Natural killer cell (primary cell): ENCODE measurements at regions of chr10 and their contacts with region 1.

Region 1: GRCh38 chr10:5014936-5015335 is 11.3 kb upstream of the AKR1C2 start:
- DNase-seq: peak in 1 of 2 donors; percentile 5
- ATAC-seq: peak in 2 of 3 donors; percentile 34 to 53
- H3K4me3 ChIP-seq: no peak overlapping the region
- H3K4me3 Mint-ChIP-seq: no peak overlapping the region
- H3K27ac ChIP-seq: no peak overlapping the region
- H3K27ac Mint-ChIP-seq: no peak overlapping the region
- H3K4me1 ChIP-seq: no peaks in the 10 kb centered on the region
- H3K4me1 Mint-ChIP-seq: no peaks in the 10 kb centered on the region
- H3K27me3 ChIP-seq: no peaks in the 10 kb centered on the region
- H3K27me3 Mint-ChIP-seq: no peaks in the 10 kb centered on the region
- CTCF ChIP-seq: no peak

Region 2: DNA sequence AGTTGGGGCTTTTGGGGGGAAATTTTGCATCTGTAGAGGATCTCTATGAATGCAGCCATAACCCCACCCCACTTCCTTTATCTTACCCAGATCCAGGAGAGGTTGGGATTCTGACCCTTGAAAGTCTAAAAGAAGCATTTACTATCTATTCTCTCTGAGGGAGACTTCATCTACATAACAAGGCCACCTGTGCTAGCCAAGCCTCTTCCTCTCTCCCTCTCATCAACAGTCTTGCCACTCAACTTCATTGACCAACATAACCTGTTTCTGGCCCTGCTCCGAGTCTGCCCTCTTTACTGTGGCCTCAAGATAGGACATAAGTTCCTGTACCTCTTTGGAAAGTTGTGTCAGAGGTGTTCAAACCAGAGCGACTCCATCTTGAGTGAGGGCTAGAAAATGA is 370.3 kb after region 1 on chr10:
- intact Hi-C with region 1: loop called (anchors 10 kb)
- DNase-seq: no peak
- ATAC-seq: no peak
- H3K4me3 ChIP-seq: no peak overlapping the region
- H3K4me3 Mint-ChIP-seq: no peak overlapping the region
- H3K27ac ChIP-seq: no peak overlapping the region
- H3K27ac Mint-ChIP-seq: no peak overlapping the region
- H3K4me1 ChIP-seq: no peaks in the 10 kb centered on the region
- H3K4me1 Mint-ChIP-seq: no peaks in the 10 kb centered on the region
- H3K27me3 ChIP-seq: no peaks in the 10 kb centered on the region
- H3K27me3 Mint-ChIP-seq: no peaks in the 10 kb centered on the region
- CTCF ChIP-seq: no peak

Region 3: GRCh38 chr10:5446390-5446926 is 431.5 kb after region 1 on chr10:
- intact Hi-C with region 1: no loop called
- DNase-seq: peak; percentile 59 to 84
- ATAC-seq: peak; percentile 83 to 92 (median 88)
- H3K4me3 ChIP-seq: peak overlapping the region; percentile 33
- H3K4me3 Mint-ChIP-seq: peak overlapping the region; percentile 85
- H3K27ac ChIP-seq: no peak overlapping the region
- H3K27ac Mint-ChIP-seq: peak overlapping the region; percentile 19 to 63
- H3K4me1 ChIP-seq: peaks cover 6% of the 10 kb centered on the region
- H3K4me1 Mint-ChIP-seq: peaks cover 17 to 18% of the 10 kb centered on the region in 2 donors
- H3K27me3 ChIP-seq: no peaks in the 10 kb centered on the region
- H3K27me3 Mint-ChIP-seq: no peaks in the 10 kb centered on the region
- CTCF ChIP-seq: no peak

Region 4: GRCh38 chr10:5666008-5666829 is 651.3 kb after region 1 on chr10 and contains the start of gene ASB13:
- intact Hi-C with region 1: no loop called
- DNase-seq: peak in 1 of 2 donors; percentile 56
- ATAC-seq: peak; percentile 73 to 86 (median 83)
- H3K4me3 ChIP-seq: peak within 1 kb of the TSS; percentile 56
- H3K4me3 Mint-ChIP-seq: peak within 1 kb of the TSS; percentile 88
- H3K27ac ChIP-seq: no peak within 1 kb of the TSS
- H3K27ac Mint-ChIP-seq: no peak within 1 kb of the TSS
- H3K4me1 ChIP-seq: peaks cover 11% of the 10 kb centered on the region
- H3K4me1 Mint-ChIP-seq: peaks cover 9 to 12% of the 10 kb centered on the region in 2 donors
- H3K27me3 ChIP-seq: no peaks in the 10 kb centered on the region
- H3K27me3 Mint-ChIP-seq: peaks cover 14 to 29% of the 10 kb centered on the region in 2 donors
- CTCF ChIP-seq: no peak
- total RNA-seq, gene ASB13: 0.99 to 2.4 (median 1.4) TPM